ENCODE measurements at regions of chr9 and their contacts with region 1.

Region 1: GRCh38 chr9:36728651-36729520 is 156.2 kb downstream of the MELK start:
- DNase-seq: peak in 1 of 2 experiments; percentile 66
- H3K4me3 ChIP-seq: no peak overlapping the region
- H3K27ac ChIP-seq: no peak overlapping the region
- H3K4me1 ChIP-seq: no peaks in the 10 kb centered on the region
- H3K27me3 ChIP-seq: no peaks in the 10 kb centered on the region
- CTCF ChIP-seq: peak; percentile 76

Region 2: GRCh38 chr9:36407122-36407723 is 321.7 kb before region 1 on chr9:
- CTCF ChIA-PET with region 1: interaction called, 14 read pairs
- POLR2A ChIA-PET with region 1: no interaction called
- intact Hi-C with region 1: loop called (anchors 1 kb)
- DNase-seq: peak; percentile 37 to 47
- H3K4me3 ChIP-seq: no peak overlapping the region
- H3K27ac ChIP-seq: no peak overlapping the region
- H3K4me1 ChIP-seq: no peaks in the 10 kb centered on the region
- H3K27me3 ChIP-seq: no peaks in the 10 kb centered on the region
- CTCF ChIP-seq: peak; percentile 88

Region 3: GRCh38 chr9:36470643-36471290 is 258.1 kb before region 1 on chr9:
- CTCF ChIA-PET with region 1: interaction called, 12 read pairs
- POLR2A ChIA-PET with region 1: no interaction called
- intact Hi-C with region 1: no loop called
- DNase-seq: peak in 1 of 2 experiments; percentile 35
- H3K4me3 ChIP-seq: peak overlapping the region; percentile 39; the same call in 1 of the 2 replicates
- H3K27ac ChIP-seq: 0 out of 2 replicates have a peak overlapping the region, but pooled peaks have one; percentile 29
- H3K4me1 ChIP-seq: no peaks in the 10 kb centered on the region
- H3K27me3 ChIP-seq: no peaks in the 10 kb centered on the region
- CTCF ChIP-seq: no peak

Region 4: GRCh38 chr9:36632892-36633291 is 96.0 kb before region 1 on chr9:
- CTCF ChIA-PET with region 1: interaction called, 10 read pairs
- POLR2A ChIA-PET with region 1: no interaction called
- intact Hi-C with region 1: loop called (anchors 1 kb)
- DNase-seq: no peak
- H3K4me3 ChIP-seq: no peak overlapping the region
- H3K27ac ChIP-seq: no peak overlapping the region
- H3K4me1 ChIP-seq: no peaks in the 10 kb centered on the region
- H3K27me3 ChIP-seq: no peaks in the 10 kb centered on the region
- CTCF ChIP-seq: peak; percentile 70

Region 5: DNA sequence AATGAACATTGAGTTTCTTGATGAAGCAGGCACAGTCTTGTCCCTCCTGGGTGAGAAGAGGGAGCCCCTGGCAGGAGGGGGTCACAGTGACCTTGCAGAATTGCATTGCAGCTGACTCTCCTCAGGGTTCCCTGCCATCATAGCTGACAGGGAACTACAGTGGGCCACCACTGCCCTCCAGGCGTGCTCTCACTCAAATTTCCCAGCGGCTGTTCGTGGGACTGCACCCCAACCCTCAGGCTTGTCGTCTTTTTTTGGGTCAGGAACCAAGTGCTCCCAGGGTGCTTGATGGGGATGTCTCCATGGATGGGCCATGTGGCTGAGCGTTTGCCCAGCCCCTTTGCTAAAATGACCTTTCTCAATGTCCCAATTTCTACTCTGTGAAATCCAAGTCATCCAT is 59.6 kb after region 1 on chr9:
- CTCF ChIA-PET with region 1: no interaction called
- POLR2A ChIA-PET with region 1: no interaction called
- intact Hi-C with region 1: no loop called
- DNase-seq: peak in 1 of 2 experiments; percentile 5
- H3K4me3 ChIP-seq: no peak overlapping the region
- H3K27ac ChIP-seq: no peak overlapping the region
- H3K4me1 ChIP-seq: no peaks in the 10 kb centered on the region
- H3K27me3 ChIP-seq: peaks cover 13% of the 10 kb centered on the region; the same call in 1 of the 2 replicates
- CTCF ChIP-seq: peak; percentile 53

Region 6: GRCh38 chr9:37011530-37011929 is 282.6 kb after region 1 on chr9:
- CTCF ChIA-PET with region 1: no interaction called
- POLR2A ChIA-PET with region 1: no interaction called
- intact Hi-C with region 1: no loop called
- DNase-seq: no peak
- H3K4me3 ChIP-seq: no peak overlapping the region
- H3K27ac ChIP-seq: no peak overlapping the region
- H3K4me1 ChIP-seq: no peaks in the 10 kb centered on the region
- H3K27me3 ChIP-seq: peaks cover 72% of the 10 kb centered on the region
- CTCF ChIP-seq: no peak